ENCODE measurements at regions of chr1 and their contacts with region 1.

Region 1: DNA sequence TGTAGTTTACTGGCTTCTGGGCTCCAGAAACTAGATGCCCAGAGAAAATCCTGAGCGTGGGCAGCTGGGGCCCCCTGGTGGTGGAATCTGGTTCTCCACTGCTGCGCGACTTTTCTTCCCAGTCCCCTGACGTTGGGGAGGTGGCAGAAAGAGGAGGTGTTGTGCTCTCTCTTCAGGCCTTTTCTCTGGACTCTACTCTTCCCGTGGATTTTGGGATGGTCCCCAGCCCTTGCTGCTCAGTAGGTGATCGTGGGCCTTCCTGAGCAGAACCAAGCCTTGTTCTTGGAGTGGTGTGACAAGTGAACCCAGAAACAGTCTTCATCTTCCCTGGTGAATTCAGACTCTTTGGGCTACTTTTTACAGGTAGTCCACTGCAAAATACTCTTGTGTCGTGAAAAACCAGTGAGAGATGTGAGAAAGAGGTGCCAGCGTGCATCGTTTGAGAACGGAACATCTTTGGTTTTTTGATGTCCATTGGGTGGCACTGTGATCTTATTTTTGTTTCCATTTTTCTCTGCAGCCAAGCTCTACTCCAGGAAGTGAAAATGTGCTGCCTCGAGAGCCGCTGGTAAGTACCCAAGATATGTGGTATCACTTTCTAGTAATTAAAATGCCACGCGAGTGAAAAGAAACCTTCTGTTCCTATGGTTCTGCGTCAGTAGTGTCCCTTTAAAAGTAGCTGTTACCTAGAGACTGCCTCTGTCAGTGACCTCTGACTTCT is 20.2 kb downstream of the PEX14 start:
- DNase-seq: peak; percentile 55 to 87
- ATAC-seq: peak; percentile 90

Region 2: DNA sequence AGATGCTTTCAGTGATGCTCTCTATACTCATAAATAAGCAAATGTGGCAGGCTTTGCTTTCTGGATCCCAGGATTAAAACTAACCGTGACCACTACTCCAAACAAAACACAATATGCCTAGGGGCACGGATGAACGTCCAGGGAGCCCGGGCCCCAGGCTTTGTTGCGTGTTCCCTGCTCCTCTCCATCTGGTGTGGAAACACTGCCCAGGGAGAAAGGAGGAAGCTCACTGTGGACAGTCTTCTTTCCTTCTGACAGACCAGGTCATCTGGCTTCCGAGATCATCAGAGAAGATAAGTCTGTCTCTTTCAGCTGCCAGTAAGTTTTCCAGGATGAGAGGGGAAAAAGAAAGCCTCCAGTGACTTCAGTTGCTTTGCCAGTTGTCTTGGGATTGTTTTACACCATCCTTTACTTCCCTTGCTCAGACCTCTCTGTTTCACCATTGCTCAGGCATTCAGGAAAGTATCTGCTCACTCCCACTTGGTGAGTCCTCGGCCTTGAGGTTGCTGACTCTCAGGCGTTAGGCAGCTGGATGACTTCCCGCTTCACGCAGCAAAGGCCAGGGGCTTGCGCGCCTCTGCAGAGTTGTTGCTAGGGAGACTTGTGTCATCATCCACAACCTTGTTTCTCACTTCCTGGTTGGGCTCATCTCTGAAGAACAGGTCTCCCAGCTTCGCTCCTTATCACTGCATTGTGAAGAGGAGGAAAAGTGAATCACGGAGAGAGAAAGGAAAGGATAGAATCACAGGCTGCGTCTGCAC is 116.7 kb before region 1 on chr1:
- intact Hi-C with region 1: loop called in 1 of 2 experiments (anchors 10 kb)
- DNase-seq: peak in 1 of 2 donors; percentile 12
- ATAC-seq: peak; percentile 31